Endothelial cell of umbilical vein (primary cell): ENCODE measurements at regions of chr1 and their contacts with region 1.

Region 1: GRCh38 chr1:183655562-183656075 is 2.5 kb upstream of the APOBEC4 start:
- DNase-seq: peak; percentile 81
- H3K4me3 ChIP-seq: no peak overlapping the region
- H3K27ac ChIP-seq: no peak overlapping the region
- H3K4me1 ChIP-seq: peaks cover 27% of the 10 kb centered on the region
- H3K27me3 ChIP-seq: no peaks in the 10 kb centered on the region
- CTCF ChIP-seq: peak; percentile 73 to 81
- POLR2A ChIP-seq: no peak

Region 2: DNA sequence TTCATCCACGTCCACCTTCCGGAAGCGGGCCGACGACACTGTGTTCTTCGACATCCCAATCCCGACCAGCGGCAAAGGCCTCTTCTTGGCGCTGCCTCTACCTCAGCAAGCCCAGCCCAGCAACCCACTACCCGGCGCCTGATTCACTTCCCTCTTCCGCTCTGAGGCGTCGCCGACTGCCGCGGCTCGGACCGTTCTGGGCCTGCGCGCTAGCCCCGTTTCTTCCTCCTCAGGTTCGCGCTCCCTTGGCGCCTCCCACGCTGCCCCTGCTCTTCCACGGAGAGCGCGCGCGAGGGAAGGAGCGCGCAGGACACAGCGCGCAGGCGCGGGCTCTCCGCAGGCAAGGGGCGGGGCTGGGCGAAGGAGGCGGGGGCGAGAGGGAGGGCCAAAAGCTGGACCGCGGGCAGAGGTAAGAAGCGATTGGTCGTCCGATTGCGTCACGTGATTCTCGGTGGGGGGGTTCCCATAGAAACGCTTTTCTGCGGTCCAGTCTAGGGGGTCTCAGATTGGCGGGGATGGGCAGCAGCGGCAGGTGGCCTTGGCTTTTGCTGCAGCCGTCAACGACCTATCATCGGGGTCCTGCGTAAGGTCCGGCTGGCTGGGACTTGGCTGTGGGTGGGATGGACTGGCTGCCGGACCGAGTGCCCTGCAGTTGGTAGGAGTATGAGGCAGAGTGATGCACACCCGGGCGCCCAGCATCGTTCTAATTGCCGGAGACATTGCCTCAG is 19.8 kb before region 1 on chr1 and contains the start of gene ARPC5:
- CTCF ChIA-PET with region 1: interaction called, 10 read pairs
- POLR2A ChIA-PET with region 1: no interaction called
- dilution Hi-C with region 1: no loop called
- intact Hi-C with region 1: loop called (anchors 1 kb)
- DNase-seq: peak; percentile 100
- H3K4me3 ChIP-seq: peak within 1 kb of the TSS; percentile 93 to 100 (median 99)
- H3K27ac ChIP-seq: peak within 1 kb of the TSS; percentile 67
- H3K4me1 ChIP-seq: peaks cover 28% of the 10 kb centered on the region
- H3K27me3 ChIP-seq: no peaks in the 10 kb centered on the region
- CTCF ChIP-seq: no peak
- POLR2A ChIP-seq: peak; percentile 95
- total RNA-seq, gene ARPC5: 185 and 190 TPM in 2 replicates

Region 3: GRCh38 chr1:183670178-183670577 is 14.6 kb after region 1 on chr1:
- CTCF ChIA-PET with region 1: interaction called, 15 read pairs
- POLR2A ChIA-PET with region 1: no interaction called
- dilution Hi-C with region 1: no loop called
- intact Hi-C with region 1: no loop called
- DNase-seq: no peak
- H3K4me3 ChIP-seq: no peak overlapping the region
- H3K27ac ChIP-seq: no peak overlapping the region
- H3K4me1 ChIP-seq: no peaks in the 10 kb centered on the region
- H3K27me3 ChIP-seq: no peaks in the 10 kb centered on the region
- CTCF ChIP-seq: peak in 1 of 2 donors; percentile 5
- POLR2A ChIP-seq: no peak